GM12878 (cell line): ENCODE measurements at regions of chr1 and their contacts with region 1.

Region 1: GRCh38 chr1:101178688-101179491 is 57.9 kb upstream of the S1PR1 start:
- DNase-seq: peak; percentile 80
- ATAC-seq: peak; percentile 88
- H3K4me3 ChIP-seq: peak overlapping the region; percentile 32; the same call in 1 of the 2 replicates
- H3K27ac ChIP-seq: peak overlapping the region; percentile 94
- H3K4me1 ChIP-seq: peaks cover 16% of the 10 kb centered on the region
- H3K27me3 ChIP-seq: no peaks in the 10 kb centered on the region
- CTCF ChIP-seq: no peak
- EP300 ChIP-seq: peak; percentile 90 to 95
- POLR2A ChIP-seq: no peak
- RAD21 ChIP-seq: peak; percentile 15; the same call in 1 of the 2 replicates

Region 2: DNA sequence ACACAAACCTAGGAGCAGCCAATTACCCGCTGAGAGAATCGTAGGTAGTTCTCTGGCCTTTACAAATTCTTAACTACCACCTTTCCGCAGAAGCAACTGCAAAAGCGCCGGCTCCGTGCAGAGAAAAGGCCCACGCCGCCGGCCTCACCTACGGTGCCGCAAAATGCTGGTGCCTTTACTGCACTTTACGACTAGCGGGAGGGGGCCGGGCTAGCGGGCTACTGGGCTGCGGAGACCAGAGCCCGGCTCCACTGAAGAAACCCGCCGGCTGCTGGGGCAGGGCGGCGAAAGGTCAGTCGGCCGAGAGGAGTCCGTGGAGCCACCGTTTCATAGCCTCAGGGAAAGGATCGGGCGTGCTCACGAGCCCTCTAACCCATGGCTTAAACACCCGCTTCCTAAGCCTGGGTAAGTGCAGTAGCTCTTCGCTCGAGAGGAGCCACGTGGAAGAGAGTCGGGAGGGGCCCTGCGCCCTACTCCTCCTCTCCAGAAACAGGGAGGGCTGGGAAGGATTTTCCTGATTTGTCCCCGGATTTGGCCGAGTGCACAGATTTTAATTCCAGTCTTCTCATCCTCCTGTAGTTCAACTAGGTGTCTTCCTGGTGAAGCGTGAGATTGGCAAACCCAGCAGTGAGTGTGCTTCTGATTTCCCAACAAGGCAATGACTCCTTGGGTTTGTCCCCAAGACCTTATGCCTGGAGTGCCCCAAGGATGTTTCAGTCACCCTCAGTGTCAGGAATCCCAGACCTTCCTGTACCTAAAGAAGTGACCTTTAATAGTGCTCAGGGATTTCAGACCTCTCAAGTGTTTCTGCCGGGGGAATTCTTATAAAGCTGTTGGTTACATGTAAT is 153.0 kb before region 1 on chr1 and contains the start of gene DPH5:
- CTCF ChIA-PET with region 1: no interaction called
- POLR2A ChIA-PET with region 1: no interaction called
- RAD21 ChIA-PET with region 1: no interaction called
- SMC1A ChIA-PET with region 1: interaction called, 6 read pairs
- in situ Hi-C with region 1: no loop called
- intact Hi-C with region 1: loop called (anchors 5 kb)
- DNase-seq: peak; percentile 66
- ATAC-seq: peak; percentile 88
- H3K4me3 ChIP-seq: peak within 1 kb of the TSS; percentile 74
- H3K27ac ChIP-seq: peak within 1 kb of the TSS; percentile 94
- H3K4me1 ChIP-seq: peaks cover 18% of the 10 kb centered on the region
- H3K27me3 ChIP-seq: no peaks in the 10 kb centered on the region
- CTCF ChIP-seq: no peak
- EP300 ChIP-seq: no peak
- POLR2A ChIP-seq: peak; percentile 98
- RAD21 ChIP-seq: peak; percentile 24; the same call in 1 of the 2 replicates
- polyA plus RNA-seq, gene DPH5: 83.7 to 95.7 TPM

Region 3: GRCh38 chr1:101203820-101204540 is 25.1 kb after region 1 on chr1:
- CTCF ChIA-PET with region 1: interaction called, 3 read pairs
- POLR2A ChIA-PET with region 1: interaction called, 9 read pairs
- RAD21 ChIA-PET with region 1: interaction called, 7 read pairs
- SMC1A ChIA-PET with region 1: interaction called, 7 read pairs
- in situ Hi-C with region 1: no loop called
- intact Hi-C with region 1: loop called (anchors 1 kb)
- DNase-seq: no peak
- ATAC-seq: no peak
- H3K4me3 ChIP-seq: no peak overlapping the region
- H3K27ac ChIP-seq: no peak overlapping the region
- H3K4me1 ChIP-seq: peaks cover 10% of the 10 kb centered on the region
- H3K27me3 ChIP-seq: no peaks in the 10 kb centered on the region
- CTCF ChIP-seq: no peak
- EP300 ChIP-seq: no peak
- POLR2A ChIP-seq: no peak
- RAD21 ChIP-seq: no peak